Aorta (tissue), 5 donors: ENCODE measurements at regions of chr1 and their contacts with region 1.

Region 1: GRCh38 chr1:11099310-11100149 is at the start of gene EXOSC10:
- DNase-seq: peak; percentile 95 to 98
- ATAC-seq: peak; percentile 99
- H3K4me3 ChIP-seq: peak within 1 kb of the TSS; percentile 61 to 90
- H3K27ac ChIP-seq: peak within 1 kb of the TSS in 1 of 2 donors; percentile 28
- H3K4me1 ChIP-seq: no peaks in the 10 kb centered on the region
- H3K27me3 ChIP-seq: no peaks in the 10 kb centered on the region
- total RNA-seq, gene EXOSC10: 45.3 to 53.8 TPM

Region 2: GRCh38 chr1:11158720-11159321 is 59.3 kb after region 1 on chr1:
- intact Hi-C with region 1: loop called in 1 of 2 experiments (anchors 5 kb)
- DNase-seq: no peak
- ATAC-seq: peak; percentile 38
- H3K4me3 ChIP-seq: no peak overlapping the region
- H3K27ac ChIP-seq: peak overlapping the region in 1 of 2 donors; percentile 40
- H3K4me1 ChIP-seq: no peaks in the 10 kb centered on the region
- H3K27me3 ChIP-seq: no peaks in the 10 kb centered on the region